ENCODE measurements at regions of chr1 and their contacts with region 1.

Region 1: GRCh38 chr1:233440951-233441401 is 113.5 kb downstream of the MAP3K21 start:
- DNase-seq: no peak
- H3K4me3 ChIP-seq: no peak overlapping the region
- H3K27ac ChIP-seq: no peak overlapping the region
- H3K4me1 ChIP-seq: peaks cover 0 to 5% (median 4%) of the 10 kb centered on the region in 3 donors
- H3K27me3 ChIP-seq: peaks cover 0 to 35% (median 0%) of the 10 kb centered on the region in 4 donors
- CTCF ChIP-seq: peak in 5 of 6 experiments; percentile 45 to 74 (median 60)
- POLR2A ChIP-seq: no peak

Region 2: DNA sequence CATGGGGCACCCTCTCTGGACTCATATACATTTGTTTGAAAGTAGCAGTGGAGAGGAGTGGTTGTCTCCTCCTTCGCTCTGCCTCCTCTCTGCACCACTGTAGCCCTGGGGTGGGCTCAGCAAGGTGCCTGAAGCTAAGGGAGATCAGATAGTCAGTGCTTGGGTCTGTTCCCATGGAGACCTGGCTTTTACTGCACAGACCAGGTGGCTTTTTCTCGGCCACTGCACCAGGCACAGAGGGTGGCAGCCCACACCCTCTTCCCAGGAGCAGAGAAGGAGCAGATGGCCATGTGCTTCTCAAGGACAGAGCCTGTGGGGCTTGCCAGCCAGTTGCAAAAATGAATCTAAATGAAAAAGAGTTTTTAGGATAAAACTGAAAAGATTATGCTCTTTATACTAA is 49.5 kb after region 1 on chr1:
- intact Hi-C with region 1: no loop called
- DNase-seq: no peak
- H3K4me3 ChIP-seq: no peak overlapping the region
- H3K27ac ChIP-seq: no peak overlapping the region
- H3K4me1 ChIP-seq: no peaks in the 10 kb centered on the region
- H3K27me3 ChIP-seq: no peaks in the 10 kb centered on the region
- CTCF ChIP-seq: no peak
- POLR2A ChIP-seq: no peak

Region 3: DNA sequence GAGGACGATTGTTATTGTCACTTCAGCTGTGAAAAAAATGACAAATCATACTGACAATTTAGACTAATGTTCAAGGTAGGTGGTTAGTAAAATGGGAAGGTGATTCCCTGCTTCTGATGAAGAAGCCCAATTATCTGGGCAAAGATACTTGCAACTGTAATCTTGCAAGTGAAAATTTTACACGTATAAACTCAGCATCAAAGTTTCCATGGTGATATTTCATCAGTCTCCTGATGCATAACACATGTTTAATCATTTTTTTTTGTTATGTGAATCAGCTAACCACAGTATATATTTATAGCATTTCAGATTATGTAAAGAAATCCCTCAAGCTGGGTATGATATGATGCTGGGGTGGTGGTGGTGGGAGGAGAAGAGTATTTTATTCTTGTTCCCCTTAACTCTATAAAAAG is 156.5 kb after region 1 on chr1:
- intact Hi-C with region 1: no loop called
- DNase-seq: no peak
- H3K4me3 ChIP-seq: no peak overlapping the region
- H3K27ac ChIP-seq: no peak overlapping the region
- H3K4me1 ChIP-seq: no peaks in the 10 kb centered on the region
- H3K27me3 ChIP-seq: peaks cover 0 to 6% (median 0%) of the 10 kb centered on the region in 4 donors
- CTCF ChIP-seq: no peak
- POLR2A ChIP-seq: no peak

Region 4: GRCh38 chr1:233788687-233789086 is 347.7 kb after region 1 on chr1:
- intact Hi-C with region 1: loop called (anchors 5 kb)
- DNase-seq: no peak
- H3K4me3 ChIP-seq: no peak overlapping the region
- H3K27ac ChIP-seq: no peak overlapping the region
- H3K4me1 ChIP-seq: no peaks in the 10 kb centered on the region
- H3K27me3 ChIP-seq: peaks cover 0 to 24% (median 0%) of the 10 kb centered on the region in 4 donors
- CTCF ChIP-seq: no peak
- POLR2A ChIP-seq: no peak